ENCODE measurements at regions of chr3 and their contacts with region 1.

Region 1: DNA sequence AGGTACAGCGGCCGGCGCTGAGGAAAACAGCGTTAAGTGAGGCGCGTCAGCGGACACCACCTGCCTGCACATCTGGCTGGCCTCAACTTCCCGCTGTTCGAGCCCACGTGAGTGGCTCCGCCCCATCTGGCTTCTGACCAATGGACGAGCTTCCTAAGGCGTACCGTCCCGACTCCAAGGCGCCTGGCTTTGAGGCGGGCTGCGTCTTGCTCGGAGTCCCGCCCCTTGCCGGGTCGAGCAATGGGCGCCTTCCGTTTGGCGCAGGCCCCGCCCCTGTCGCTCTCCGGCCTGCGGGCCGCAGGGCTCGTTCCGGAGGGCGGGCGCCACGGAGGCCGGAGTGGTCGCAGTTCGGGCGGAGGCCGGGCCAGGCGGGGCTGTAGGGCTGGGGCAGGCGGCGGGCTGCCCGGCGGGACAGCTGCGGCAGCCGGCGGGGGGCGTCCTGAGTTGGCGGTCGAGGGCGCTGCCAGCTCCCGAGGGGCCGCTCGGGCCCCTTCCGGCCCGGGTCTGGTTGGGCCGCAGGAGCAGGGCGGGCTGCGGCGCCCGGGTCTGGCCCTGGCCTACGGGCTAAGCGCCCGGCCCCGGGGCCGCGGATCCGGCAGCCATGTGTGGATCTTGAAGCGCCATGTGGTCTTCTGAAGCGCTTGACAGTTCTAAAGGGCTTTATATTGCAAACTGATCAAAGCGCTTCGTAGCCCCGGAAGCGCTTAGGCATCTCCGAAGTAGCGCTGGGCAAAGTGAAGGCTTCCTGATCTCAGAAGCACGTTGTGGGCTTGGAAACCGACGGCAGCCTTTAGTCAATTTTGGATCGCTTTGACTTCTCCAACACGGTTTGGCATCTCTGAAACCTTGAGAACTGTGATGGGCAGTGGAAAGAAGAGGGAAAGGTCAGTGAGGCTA is at the start of gene TATDN2:
- DNase-seq: peak; percentile 75 to 98 (median 91)
- ATAC-seq: peak; percentile 92
- H3K4me3 ChIP-seq: peak within 1 kb of the TSS; percentile 86 to 92
- H3K4me3 Mint-ChIP-seq: peak within 1 kb of the TSS; percentile 97
- H3K27ac ChIP-seq: peak within 1 kb of the TSS; percentile 64 to 76
- H3K27ac Mint-ChIP-seq: peak within 1 kb of the TSS; percentile 93
- H3K4me1 ChIP-seq: peaks cover 32% of the 10 kb centered on the region
- H3K4me1 Mint-ChIP-seq: peaks cover 52% of the 10 kb centered on the region
- H3K27me3 ChIP-seq: no peaks in the 10 kb centered on the region
- H3K27me3 Mint-ChIP-seq: no peaks in the 10 kb centered on the region
- CTCF ChIP-seq: no peak
- total RNA-seq, gene TATDN2: 40.2 to 40.3 TPM

Region 2: DNA sequence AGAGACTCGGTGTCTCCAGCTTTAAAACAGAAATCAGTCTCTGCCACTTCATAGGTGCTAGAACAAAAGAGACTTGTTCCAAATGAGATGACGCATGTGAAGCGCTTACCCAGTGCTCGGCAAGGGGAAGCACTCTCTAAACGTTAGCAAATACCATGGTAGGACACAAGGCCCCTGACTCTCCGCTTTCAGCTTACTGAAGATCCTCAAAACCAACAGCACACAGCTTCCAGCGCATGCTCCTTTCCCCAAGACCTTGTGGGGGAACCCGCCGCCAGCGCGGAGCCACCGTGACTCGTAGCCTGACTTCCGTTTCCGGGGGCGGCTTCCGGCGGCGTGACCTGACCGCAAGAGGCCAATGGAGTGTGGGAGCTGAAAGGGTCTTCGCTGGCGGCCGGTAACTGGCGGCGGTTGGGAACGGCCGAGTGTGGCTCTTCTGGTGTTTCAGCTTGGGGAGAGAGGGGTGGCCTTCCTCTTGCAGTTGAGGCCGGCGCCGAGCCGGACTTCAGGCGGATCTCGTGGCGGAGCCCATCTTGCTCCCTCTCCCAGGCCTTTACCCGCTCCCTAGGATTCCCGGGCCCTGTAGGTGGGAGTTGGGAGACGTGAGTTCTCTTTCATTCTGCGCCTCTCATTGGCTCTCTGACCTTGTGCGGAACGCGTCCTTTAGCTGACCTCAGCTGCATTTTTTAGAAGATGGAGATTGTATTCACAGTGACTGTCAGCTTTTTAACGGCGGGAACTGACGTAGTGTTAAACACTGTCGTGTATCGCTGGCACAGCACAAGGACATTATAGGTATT is 885.5 kb before region 1 on chr3 and contains the start of gene THUMPD3:
- CTCF ChIA-PET with region 1: no interaction called
- POLR2A ChIA-PET with region 1: no interaction called
- intact Hi-C with region 1: loop called in 1 of 2 experiments (anchors 10 kb)
- DNase-seq: peak; percentile 82 to 94 (median 92)
- ATAC-seq: peak; percentile 92
- H3K4me3 ChIP-seq: peak within 1 kb of the TSS; percentile 79 to 97
- H3K4me3 Mint-ChIP-seq: peak within 1 kb of the TSS; percentile 96
- H3K27ac ChIP-seq: peak within 1 kb of the TSS; percentile 93 to 97
- H3K27ac Mint-ChIP-seq: peak within 1 kb of the TSS; percentile 99
- H3K4me1 ChIP-seq: peaks cover 19% of the 10 kb centered on the region
- H3K4me1 Mint-ChIP-seq: peaks cover 35% of the 10 kb centered on the region
- H3K27me3 ChIP-seq: no peaks in the 10 kb centered on the region
- H3K27me3 Mint-ChIP-seq: no peaks in the 10 kb centered on the region
- CTCF ChIP-seq: no peak
- total RNA-seq, gene THUMPD3: 84.1 to 84.3 TPM

Region 3: GRCh38 chr3:9792405-9793160 is 455.8 kb before region 1 on chr3 and contains the starts of genes ARPC4 and TADA3:
- CTCF ChIA-PET with region 1: no interaction called
- POLR2A ChIA-PET with region 1: no interaction called
- intact Hi-C with region 1: loop called in 1 of 2 experiments (anchors 1 kb)
- DNase-seq: peak; percentile 82 to 97 (median 92)
- ATAC-seq: peak; percentile 83
- H3K4me3 ChIP-seq: peak within 1 kb of the TSS; percentile 76 to 96
- H3K4me3 Mint-ChIP-seq: peak within 1 kb of the TSS; percentile 94
- H3K27ac ChIP-seq: peak within 1 kb of the TSS; percentile 93 to 98
- H3K27ac Mint-ChIP-seq: peak within 1 kb of the TSS; percentile 98
- H3K4me1 ChIP-seq: peaks cover 48% of the 10 kb centered on the region
- H3K4me1 Mint-ChIP-seq: peaks cover 58% of the 10 kb centered on the region
- H3K27me3 ChIP-seq: no peaks in the 10 kb centered on the region
- H3K27me3 Mint-ChIP-seq: no peaks in the 10 kb centered on the region
- CTCF ChIP-seq: no peak
- total RNA-seq, gene ARPC4: 97.7 to 104 TPM
- total RNA-seq, gene TADA3: 9.5 to 11.0 TPM

Region 4: GRCh38 chr3:9986237-9986725 is 262.2 kb before region 1 on chr3:
- CTCF ChIA-PET with region 1: no interaction called
- POLR2A ChIA-PET with region 1: no interaction called
- intact Hi-C with region 1: loop called in 1 of 2 experiments (anchors 1 kb)
- DNase-seq: no peak
- ATAC-seq: peak; percentile 46
- H3K4me3 ChIP-seq: peak overlapping the region; percentile 71 to 83
- H3K4me3 Mint-ChIP-seq: peak overlapping the region; percentile 93
- H3K27ac ChIP-seq: peak overlapping the region; percentile 83 to 93
- H3K27ac Mint-ChIP-seq: peak overlapping the region; percentile 96
- H3K4me1 ChIP-seq: peaks cover 24% of the 10 kb centered on the region
- H3K4me1 Mint-ChIP-seq: peaks cover 39% of the 10 kb centered on the region
- H3K27me3 ChIP-seq: no peaks in the 10 kb centered on the region
- H3K27me3 Mint-ChIP-seq: no peaks in the 10 kb centered on the region
- CTCF ChIP-seq: no peak

Region 5: GRCh38 chr3:10115326-10116137 is 132.9 kb before region 1 on chr3 and contains the start of gene BRK1:
- CTCF ChIA-PET with region 1: no interaction called
- POLR2A ChIA-PET with region 1: interaction called, 3 read pairs
- intact Hi-C with region 1: loop called in 1 of 2 experiments (anchors 1 kb)
- DNase-seq: peak; percentile 83 to 98 (median 93)
- ATAC-seq: peak; percentile 98
- H3K4me3 ChIP-seq: peak within 1 kb of the TSS; percentile 87 to 95
- H3K4me3 Mint-ChIP-seq: peak within 1 kb of the TSS; percentile 99
- H3K27ac ChIP-seq: peak within 1 kb of the TSS; percentile 81 to 87
- H3K27ac Mint-ChIP-seq: peak within 1 kb of the TSS; percentile 99
- H3K4me1 ChIP-seq: peaks cover 27% of the 10 kb centered on the region
- H3K4me1 Mint-ChIP-seq: peaks cover 43% of the 10 kb centered on the region
- H3K27me3 ChIP-seq: no peaks in the 10 kb centered on the region
- H3K27me3 Mint-ChIP-seq: peaks cover under 1% of the 10 kb centered on the region
- CTCF ChIP-seq: no peak
- total RNA-seq, gene BRK1: 31.5 to 36.3 TPM

Region 6: GRCh38 chr3:10192953-10193691 is 55.3 kb before region 1 on chr3:
- CTCF ChIA-PET with region 1: no interaction called
- POLR2A ChIA-PET with region 1: interaction called, 16 read pairs
- intact Hi-C with region 1: loop called in 1 of 2 experiments (anchors 2 kb)
- DNase-seq: peak; percentile 16 to 79 (median 62)
- ATAC-seq: peak; percentile 32
- H3K4me3 ChIP-seq: peak overlapping the region in 1 of 2 experiments; percentile 40
- H3K4me3 Mint-ChIP-seq: peak overlapping the region; percentile 80
- H3K27ac ChIP-seq: peak overlapping the region in 1 of 2 experiments; percentile 92
- H3K27ac Mint-ChIP-seq: peak overlapping the region; percentile 99
- H3K4me1 ChIP-seq: peaks cover 83% of the 10 kb centered on the region
- H3K4me1 Mint-ChIP-seq: peaks cover 79% of the 10 kb centered on the region
- H3K27me3 ChIP-seq: no peaks in the 10 kb centered on the region
- H3K27me3 Mint-ChIP-seq: no peaks in the 10 kb centered on the region
- CTCF ChIP-seq: no peak